Calu3 (cell line): ENCODE measurements at regions of chr11 and their contacts with region 1.

Region 1: GRCh38 chr11:47946682-47947575 is 33.4 kb upstream of the PTPRJ start:
- DNase-seq: peak; percentile 88
- H3K4me3 Mint-ChIP-seq: no peak overlapping the region
- H3K27ac Mint-ChIP-seq: peak overlapping the region; percentile 79
- H3K4me1 Mint-ChIP-seq: peaks cover 58% of the 10 kb centered on the region
- H3K27me3 Mint-ChIP-seq: no peaks in the 10 kb centered on the region
- CTCF ChIP-seq: no peak

Region 2: GRCh38 chr11:47991266-47991830 is 44.4 kb after region 1 on chr11:
- CTCF ChIA-PET with region 1: interaction called, 5 read pairs
- intact Hi-C with region 1: loop called (anchors 5 kb)
- DNase-seq: peak; percentile 72
- H3K4me3 Mint-ChIP-seq: peak overlapping the region; percentile 64
- H3K27ac Mint-ChIP-seq: peak overlapping the region; percentile 98
- H3K4me1 Mint-ChIP-seq: peaks cover 60% of the 10 kb centered on the region
- H3K27me3 Mint-ChIP-seq: no peaks in the 10 kb centered on the region
- CTCF ChIP-seq: no peak

Region 3: GRCh38 chr11:48055292-48056132 is 108.6 kb after region 1 on chr11:
- CTCF ChIA-PET with region 1: interaction called, 4 read pairs
- intact Hi-C with region 1: loop called (anchors 5 kb)
- DNase-seq: peak; percentile 66
- H3K4me3 Mint-ChIP-seq: peak overlapping the region; percentile 49
- H3K27ac Mint-ChIP-seq: peak overlapping the region; percentile 88
- H3K4me1 Mint-ChIP-seq: peaks cover 78% of the 10 kb centered on the region
- H3K27me3 Mint-ChIP-seq: no peaks in the 10 kb centered on the region
- CTCF ChIP-seq: no peak

Region 4: GRCh38 chr11:48103621-48104562 is 157.0 kb after region 1 on chr11:
- CTCF ChIA-PET with region 1: interaction called, 6 read pairs
- intact Hi-C with region 1: loop called (anchors 2 kb)
- DNase-seq: peak; percentile 67
- H3K4me3 Mint-ChIP-seq: peak overlapping the region; percentile 63
- H3K27ac Mint-ChIP-seq: peak overlapping the region; percentile 88
- H3K4me1 Mint-ChIP-seq: peaks cover 92% of the 10 kb centered on the region
- H3K27me3 Mint-ChIP-seq: no peaks in the 10 kb centered on the region
- CTCF ChIP-seq: no peak